ENCODE measurements at regions of chr11 and their contacts with region 1.

Region 1: GRCh38 chr11:66001942-66002647 is at the starts of genes BANF1 and EIF1AD:
- DNase-seq: peak; percentile 92 to 94 (median 93)
- ATAC-seq: peak; percentile 92 to 93
- H3K4me3 ChIP-seq: peak within 1 kb of the TSS; percentile 83
- H3K27ac ChIP-seq: peak within 1 kb of the TSS; percentile 99
- H3K4me1 ChIP-seq: peaks cover 5% of the 10 kb centered on the region
- H3K27me3 ChIP-seq: no peaks in the 10 kb centered on the region
- total RNA-seq, gene BANF1: 175 to 258 (median 218) TPM
- total RNA-seq, gene EIF1AD: 19.3 to 22.2 (median 20.8) TPM

Region 2: DNA sequence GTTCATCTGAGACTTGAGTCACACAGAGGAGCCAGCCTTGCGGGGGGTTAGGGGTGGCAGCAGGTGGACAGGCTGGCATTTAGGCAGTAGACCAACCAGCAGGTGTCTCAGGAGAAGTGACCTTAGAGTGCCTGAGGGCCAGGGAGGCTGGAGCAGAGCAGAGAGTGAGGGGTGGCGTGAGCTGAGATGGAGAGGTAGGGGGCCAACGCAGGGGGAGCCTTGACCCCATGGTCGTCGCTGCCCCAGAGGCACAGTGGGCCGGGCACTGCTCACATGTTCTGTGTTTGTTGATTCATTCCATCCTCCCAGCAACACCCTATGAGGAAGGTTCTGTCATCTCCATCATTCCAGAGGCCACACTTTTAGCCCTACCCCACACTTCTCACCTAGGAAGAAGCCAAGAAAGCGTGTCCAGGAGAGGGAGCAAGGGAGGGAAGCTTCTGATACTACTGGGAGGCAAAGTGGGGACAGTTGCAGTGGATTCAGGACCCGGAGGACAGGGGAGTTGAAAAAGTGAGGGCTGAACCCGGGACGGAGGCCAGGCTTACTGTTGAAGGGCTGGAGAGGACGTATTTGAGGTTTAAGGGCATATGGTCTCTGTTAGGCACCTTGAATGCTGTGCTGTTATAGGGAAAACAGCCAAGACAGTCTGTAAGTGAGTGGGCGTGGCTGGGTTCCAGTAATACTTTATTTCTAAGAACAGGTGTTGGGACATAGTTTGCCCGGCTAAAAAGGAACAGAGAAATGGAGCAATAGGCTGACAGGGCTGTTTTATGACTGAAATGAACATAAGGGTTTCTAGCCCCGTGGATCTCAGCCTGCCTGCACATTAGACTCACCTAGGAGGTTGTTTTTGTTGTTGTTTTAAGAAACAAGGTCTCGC is 33.3 kb before region 1 on chr11:
- intact Hi-C with region 1: loop called in 1 of 4 experiments (anchors 5 kb)
- DNase-seq: no peak
- ATAC-seq: no peak
- H3K4me3 ChIP-seq: no peak overlapping the region
- H3K27ac ChIP-seq: no peak overlapping the region
- H3K4me1 ChIP-seq: no peaks in the 10 kb centered on the region
- H3K27me3 ChIP-seq: no peaks in the 10 kb centered on the region

Measured in right cardiac atrium (tissue), 5 donors.